T-cell (primary cell): ENCODE measurements at regions of chr10 and their contacts with region 1.

Region 1: GRCh38 chr10:96089670-96090462 is 40.2 kb upstream of the ZNF518A start:
- DNase-seq: peak; percentile 83 to 97 (median 90)
- ATAC-seq: peak; percentile 87 to 90 (median 88)
- H3K4me3 ChIP-seq: peak overlapping the region; percentile 90 to 97
- H3K4me3 Mint-ChIP-seq: peak overlapping the region; percentile 92 to 97 (median 95)
- H3K27ac ChIP-seq: peak overlapping the region; percentile 98
- H3K27ac Mint-ChIP-seq: peak overlapping the region; percentile 97 to 98
- H3K4me1 ChIP-seq: peaks cover 2 to 12% of the 10 kb centered on the region in 2 experiments
- H3K4me1 Mint-ChIP-seq: peaks cover 11% of the 10 kb centered on the region in 3 donors
- H3K27me3 ChIP-seq: peaks cover 6 to 12% of the 10 kb centered on the region in 2 experiments
- H3K27me3 Mint-ChIP-seq: peaks cover 29 to 32% of the 10 kb centered on the region in 2 donors

Region 2: GRCh38 chr10:96053985-96054384 is 35.9 kb before region 1 on chr10:
- CTCF ChIA-PET with region 1: no interaction called
- POLR2A ChIA-PET with region 1: no interaction called
- DNase-seq: no peak
- ATAC-seq: no peak
- H3K4me3 ChIP-seq: no peak overlapping the region
- H3K4me3 Mint-ChIP-seq: no peak overlapping the region
- H3K27ac ChIP-seq: no peak overlapping the region
- H3K27ac Mint-ChIP-seq: no peak overlapping the region
- H3K4me1 ChIP-seq: peaks cover 0 to 3% of the 10 kb centered on the region in 2 experiments
- H3K4me1 Mint-ChIP-seq: peaks cover 27 to 28% (median 28%) of the 10 kb centered on the region in 3 donors
- H3K27me3 ChIP-seq: no peaks in the 10 kb centered on the region
- H3K27me3 Mint-ChIP-seq: no peaks in the 10 kb centered on the region

Region 3: DNA sequence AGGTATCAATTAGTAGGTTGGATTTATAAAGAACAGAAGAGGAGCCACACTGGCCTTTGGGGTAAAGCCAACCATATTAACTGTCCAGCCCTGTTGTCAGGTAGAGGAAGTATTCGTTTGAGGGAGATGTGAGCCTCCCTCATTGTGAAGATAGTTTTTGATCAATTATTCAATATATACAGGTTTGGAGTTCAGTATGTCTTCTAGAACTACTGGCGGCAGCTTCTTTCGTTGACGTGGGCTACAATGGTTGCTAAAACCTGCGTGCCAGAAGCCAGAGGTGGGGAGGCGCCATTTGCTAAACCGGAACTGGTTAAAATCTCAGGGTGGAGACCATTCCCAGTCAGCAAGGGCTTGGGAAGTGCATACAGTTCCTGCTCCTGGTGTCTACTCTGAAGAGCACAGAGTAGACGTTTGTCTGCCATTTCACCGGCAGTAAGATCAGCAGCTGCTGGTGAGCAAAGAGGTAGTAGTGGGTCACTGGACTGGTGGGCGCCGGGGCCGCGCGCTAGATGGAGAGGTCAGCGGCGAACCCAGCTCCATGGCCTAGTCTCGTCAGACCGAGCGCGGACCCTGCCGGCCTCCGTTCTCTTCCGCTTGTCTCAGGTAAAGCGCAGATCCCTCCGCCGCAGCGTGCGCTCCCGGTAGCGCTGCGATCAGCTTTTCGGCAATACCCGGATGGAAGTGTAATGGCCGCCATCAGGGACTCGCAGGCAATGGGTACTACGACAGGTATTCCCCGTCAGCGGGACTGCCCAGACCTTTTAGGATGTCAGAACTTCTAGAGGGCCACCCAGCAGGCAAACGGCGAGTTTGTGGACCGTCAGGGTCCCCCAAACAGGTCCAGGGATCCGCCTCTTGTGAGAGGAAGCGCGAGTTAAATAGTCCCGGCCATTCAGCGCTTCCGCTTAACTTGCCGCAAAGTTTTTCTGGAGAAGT is 39.8 kb after region 1 on chr10 and contains the start of gene ZNF518A:
- CTCF ChIA-PET with region 1: interaction called in 1 of 2 experiments, 9 read pairs
- POLR2A ChIA-PET with region 1: interaction called, 13 to 18 read pairs
- DNase-seq: peak; percentile 77 to 96 (median 86)
- ATAC-seq: peak; percentile 84 to 88 (median 85)
- H3K4me3 ChIP-seq: peak within 1 kb of the TSS; percentile 73 to 97
- H3K4me3 Mint-ChIP-seq: peak within 1 kb of the TSS; percentile 93 to 97 (median 97)
- H3K27ac ChIP-seq: peak within 1 kb of the TSS; percentile 97
- H3K27ac Mint-ChIP-seq: peak within 1 kb of the TSS; percentile 99
- H3K4me1 ChIP-seq: peaks cover 8 to 16% of the 10 kb centered on the region in 2 experiments
- H3K4me1 Mint-ChIP-seq: peaks cover 21 to 27% (median 24%) of the 10 kb centered on the region in 3 donors
- H3K27me3 ChIP-seq: peaks cover 2 to 4% of the 10 kb centered on the region in 2 experiments
- H3K27me3 Mint-ChIP-seq: peaks cover 20 to 38% of the 10 kb centered on the region in 2 donors
- total RNA-seq, gene ZNF518A: 17.7 to 22.8 (median 20.6) TPM